ENCODE measurements at regions of chr7 and their contacts with region 1.

Region 1: GRCh38 chr7:34060196-34060947 is 155.0 kb downstream of the BMPER start:
- DNase-seq: no peak
- ATAC-seq: no peak
- H3K4me3 ChIP-seq: no peak overlapping the region
- H3K4me3 Mint-ChIP-seq: no peak overlapping the region
- H3K27ac ChIP-seq: no peak overlapping the region
- H3K27ac Mint-ChIP-seq: no peak overlapping the region
- H3K4me1 ChIP-seq: no peaks in the 10 kb centered on the region
- H3K4me1 Mint-ChIP-seq: no peaks in the 10 kb centered on the region
- H3K27me3 ChIP-seq: peaks cover 0 to 3% of the 10 kb centered on the region in 2 experiments
- H3K27me3 Mint-ChIP-seq: no peaks in the 10 kb centered on the region
- CTCF ChIP-seq: no peak

Region 2: DNA sequence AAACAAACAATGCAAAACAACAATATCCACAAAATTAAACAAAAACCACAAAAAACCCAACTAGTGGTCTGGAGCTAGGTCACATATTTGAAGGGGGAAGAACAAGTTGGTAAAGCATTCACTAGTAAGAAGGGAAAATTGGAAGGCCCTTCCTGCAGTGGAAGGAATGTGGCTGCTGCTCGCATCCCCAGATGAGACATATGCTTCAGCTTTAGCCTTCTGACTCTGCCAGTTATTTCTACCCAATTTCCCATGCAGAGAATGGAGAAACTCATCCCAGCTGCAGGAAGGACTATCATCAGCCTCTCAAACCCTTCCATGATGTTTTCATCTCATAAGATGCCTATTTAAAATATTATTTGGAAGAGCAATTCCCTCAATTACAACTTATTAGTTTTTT is 21.6 kb after region 1 on chr7:
- CTCF ChIA-PET with region 1: no interaction called
- POLR2A ChIA-PET with region 1: no interaction called
- intact Hi-C with region 1: loop called in 1 of 2 experiments (anchors 1 kb)
- DNase-seq: no peak
- ATAC-seq: no peak
- H3K4me3 ChIP-seq: no peak overlapping the region
- H3K4me3 Mint-ChIP-seq: no peak overlapping the region
- H3K27ac ChIP-seq: no peak overlapping the region
- H3K27ac Mint-ChIP-seq: no peak overlapping the region
- H3K4me1 ChIP-seq: no peaks in the 10 kb centered on the region
- H3K4me1 Mint-ChIP-seq: no peaks in the 10 kb centered on the region
- H3K27me3 ChIP-seq: no peaks in the 10 kb centered on the region
- H3K27me3 Mint-ChIP-seq: no peaks in the 10 kb centered on the region
- CTCF ChIP-seq: no peak

Region 3: DNA sequence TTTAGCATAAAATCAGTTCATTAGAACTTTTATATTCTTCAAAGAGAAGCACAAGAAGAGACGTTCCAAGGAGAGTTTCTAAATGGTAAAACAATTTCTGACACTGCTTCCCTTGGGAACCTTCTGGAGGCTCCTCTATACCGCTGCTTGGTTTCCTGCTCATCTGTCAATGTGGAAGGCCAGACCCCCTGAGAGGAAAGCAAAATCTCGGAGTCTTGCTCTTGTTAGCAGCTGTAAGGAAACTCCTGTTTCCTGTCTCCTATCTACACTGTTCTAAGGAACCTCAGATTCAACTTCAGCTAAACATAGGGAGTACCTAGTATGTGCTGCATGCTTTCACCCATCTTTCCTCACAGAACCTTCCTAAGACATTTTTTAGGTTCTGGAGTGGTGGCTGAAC is 167.2 kb after region 1 on chr7:
- CTCF ChIA-PET with region 1: no interaction called
- POLR2A ChIA-PET with region 1: no interaction called
- intact Hi-C with region 1: no loop called
- DNase-seq: no peak
- ATAC-seq: no peak
- H3K4me3 ChIP-seq: no peak overlapping the region
- H3K4me3 Mint-ChIP-seq: no peak overlapping the region
- H3K27ac ChIP-seq: no peak overlapping the region
- H3K27ac Mint-ChIP-seq: no peak overlapping the region
- H3K4me1 ChIP-seq: no peaks in the 10 kb centered on the region
- H3K4me1 Mint-ChIP-seq: no peaks in the 10 kb centered on the region
- H3K27me3 ChIP-seq: no peaks in the 10 kb centered on the region
- H3K27me3 Mint-ChIP-seq: no peaks in the 10 kb centered on the region
- CTCF ChIP-seq: no peak

Region 4: DNA sequence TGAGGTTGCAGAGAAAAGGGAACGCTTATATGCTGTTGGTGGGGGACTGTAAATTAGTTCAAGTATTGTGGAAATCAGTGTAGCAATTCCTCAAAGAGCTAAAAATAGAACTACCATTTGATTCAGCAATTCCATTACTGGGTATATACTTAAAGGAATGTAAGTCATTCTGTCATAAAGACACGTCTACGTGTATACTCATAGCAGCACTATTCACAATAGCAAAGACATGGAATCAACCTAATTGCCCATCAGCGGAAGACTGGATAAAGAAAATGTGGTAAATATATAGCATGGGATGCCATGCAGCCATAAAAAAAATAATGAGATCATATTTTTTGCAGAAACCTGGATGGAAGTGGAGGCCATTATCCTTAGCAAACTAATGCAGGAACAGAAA is 497.6 kb after region 1 on chr7:
- CTCF ChIA-PET with region 1: no interaction called
- POLR2A ChIA-PET with region 1: no interaction called
- intact Hi-C with region 1: no loop called
- DNase-seq: no peak
- ATAC-seq: no peak
- H3K4me3 ChIP-seq: no peak overlapping the region
- H3K4me3 Mint-ChIP-seq: no peak overlapping the region
- H3K27ac ChIP-seq: no peak overlapping the region
- H3K27ac Mint-ChIP-seq: no peak overlapping the region
- H3K4me1 ChIP-seq: no peaks in the 10 kb centered on the region
- H3K4me1 Mint-ChIP-seq: no peaks in the 10 kb centered on the region
- H3K27me3 ChIP-seq: no peaks in the 10 kb centered on the region
- H3K27me3 Mint-ChIP-seq: no peaks in the 10 kb centered on the region
- CTCF ChIP-seq: no peak

Measured in CD8-positive, alpha-beta T cell (primary cell).